Activated CD4-positive, alpha-beta memory T cell treated with anti-CD3 and anti-CD28 coated beads, Interleukin-2, amount 10 ng/mL, durations not matched to agents 7 days and 5 days (primary cell): ENCODE measurements at regions of chr15 and their contacts with region 1.

Region 1: DNA sequence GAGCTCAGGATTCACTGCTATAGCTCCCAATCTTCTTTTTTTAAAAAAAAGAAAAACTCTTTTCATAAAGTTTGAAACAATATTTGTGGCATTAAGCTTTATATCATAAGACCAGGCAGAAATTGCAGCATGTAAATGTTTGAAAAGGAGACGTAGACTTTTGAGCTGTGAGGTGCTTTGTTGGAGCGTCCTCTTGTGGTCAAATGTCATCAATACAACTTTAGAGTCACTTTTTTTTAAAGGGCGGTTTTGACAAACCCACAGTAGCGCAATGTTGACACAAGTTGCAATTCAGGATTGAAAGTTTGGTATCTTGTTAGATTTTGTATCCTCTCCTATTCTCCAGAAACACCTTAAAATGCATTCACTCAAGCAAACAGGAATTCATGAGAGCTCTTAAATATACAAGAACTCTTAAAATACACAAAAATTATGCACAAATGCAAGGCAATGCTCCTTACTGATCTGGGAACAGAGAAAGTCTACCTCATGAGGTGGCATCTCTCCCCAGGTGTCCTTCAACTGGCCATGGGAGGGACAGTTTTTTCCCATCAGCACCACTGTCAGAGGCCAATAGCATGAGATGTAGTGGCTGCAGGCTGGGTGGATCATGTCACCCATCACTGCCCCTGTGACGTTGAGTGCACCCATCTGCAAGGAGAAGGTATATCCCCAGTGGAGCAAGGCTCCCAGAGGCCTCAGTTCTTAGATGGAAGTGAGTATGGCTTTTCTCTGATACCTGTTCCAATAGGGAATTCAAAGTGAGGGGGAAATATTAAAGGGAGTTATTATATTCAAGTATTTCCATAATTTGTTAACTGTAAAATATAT is 70.7 kb downstream of the ANXA2 start:
- DNase-seq: peak; percentile 39
- H3K4me3 Mint-ChIP-seq: no peak overlapping the region
- H3K27ac Mint-ChIP-seq: no peak overlapping the region
- H3K4me1 Mint-ChIP-seq: peaks cover 15% of the 10 kb centered on the region
- H3K27me3 Mint-ChIP-seq: peaks cover 60% of the 10 kb centered on the region

Region 2: GRCh38 chr15:59725172-59725486 is 601.9 kb before region 1 on chr15:
- CTCF ChIA-PET with region 1: interaction called, 37 read pairs
- POLR2A ChIA-PET with region 1: no interaction called
- DNase-seq: no peak
- H3K4me3 Mint-ChIP-seq: no peak overlapping the region
- H3K27ac Mint-ChIP-seq: no peak overlapping the region
- H3K4me1 Mint-ChIP-seq: no peaks in the 10 kb centered on the region
- H3K27me3 Mint-ChIP-seq: peaks cover 23% of the 10 kb centered on the region

Region 3: GRCh38 chr15:59741274-59741906 is 585.6 kb before region 1 on chr15:
- CTCF ChIA-PET with region 1: interaction called, 13 read pairs
- POLR2A ChIA-PET with region 1: no interaction called
- DNase-seq: no peak
- H3K4me3 Mint-ChIP-seq: no peak overlapping the region
- H3K27ac Mint-ChIP-seq: no peak overlapping the region
- H3K4me1 Mint-ChIP-seq: no peaks in the 10 kb centered on the region
- H3K27me3 Mint-ChIP-seq: peaks cover 26% of the 10 kb centered on the region

Region 4: GRCh38 chr15:59751552-59752413 is 575.3 kb before region 1 on chr15:
- CTCF ChIA-PET with region 1: interaction called, 15 read pairs
- POLR2A ChIA-PET with region 1: interaction called, 3 read pairs
- DNase-seq: no peak
- H3K4me3 Mint-ChIP-seq: no peak overlapping the region
- H3K27ac Mint-ChIP-seq: no peak overlapping the region
- H3K4me1 Mint-ChIP-seq: peaks cover 12% of the 10 kb centered on the region
- H3K27me3 Mint-ChIP-seq: peaks cover 9% of the 10 kb centered on the region

Region 5: DNA sequence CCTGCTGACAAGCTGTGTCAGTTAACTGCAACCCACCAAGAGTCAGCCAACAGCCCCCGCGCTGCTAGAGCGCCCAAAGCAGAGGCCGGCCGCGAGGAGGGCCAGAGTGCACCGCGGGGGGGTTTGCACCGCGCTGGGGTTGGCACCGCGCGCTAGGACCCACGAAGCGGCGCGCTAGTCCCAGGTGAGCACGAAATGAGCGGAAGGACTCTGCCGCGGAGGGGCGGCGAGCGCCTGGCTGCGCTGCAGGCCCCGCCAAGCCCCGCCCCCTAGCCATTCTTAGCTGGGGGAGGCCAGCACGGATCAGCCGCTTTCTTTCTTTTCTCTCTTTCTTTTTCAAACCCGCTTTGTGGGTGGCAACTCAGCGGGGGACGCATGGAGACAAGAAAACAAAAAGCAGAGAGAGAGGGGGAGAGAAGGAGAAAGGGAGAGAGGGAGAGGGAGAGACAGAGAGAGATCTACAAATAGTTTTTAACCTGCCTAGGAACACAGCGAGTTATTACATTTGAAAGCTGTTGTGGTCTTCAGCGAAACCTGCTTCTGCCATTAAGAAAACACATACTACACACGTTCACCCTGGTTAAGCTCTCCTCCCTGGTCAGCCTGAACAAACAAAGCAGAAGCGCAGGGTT is 329.9 kb before region 1 on chr15:
- CTCF ChIA-PET with region 1: interaction called, 19 read pairs
- POLR2A ChIA-PET with region 1: no interaction called
- DNase-seq: peak; percentile 81
- H3K4me3 Mint-ChIP-seq: peak overlapping the region; percentile 67
- H3K27ac Mint-ChIP-seq: peak overlapping the region; percentile 20
- H3K4me1 Mint-ChIP-seq: peaks cover 77% of the 10 kb centered on the region
- H3K27me3 Mint-ChIP-seq: peaks cover 99% of the 10 kb centered on the region

Region 6: GRCh38 chr15:60044636-60045270 is 282.3 kb before region 1 on chr15:
- CTCF ChIA-PET with region 1: no interaction called
- POLR2A ChIA-PET with region 1: no interaction called
- DNase-seq: peak; percentile 55
- H3K4me3 Mint-ChIP-seq: peak overlapping the region; percentile 54
- H3K27ac Mint-ChIP-seq: peak overlapping the region; percentile 75
- H3K4me1 Mint-ChIP-seq: peaks cover 25% of the 10 kb centered on the region
- H3K27me3 Mint-ChIP-seq: peaks cover 7% of the 10 kb centered on the region